ENCODE measurements at regions of chr21 and their contacts with region 1.

Region 1: GRCh38 chr21:33608559-33608958 is 20.1 kb upstream of the DONSON start:
- DNase-seq: peak; percentile 75
- H3K4me3 ChIP-seq: no peak overlapping the region
- H3K27ac ChIP-seq: peak overlapping the region; percentile 70
- H3K4me1 ChIP-seq: peaks cover 11% of the 10 kb centered on the region
- H3K27me3 ChIP-seq: no peaks in the 10 kb centered on the region
- CTCF ChIP-seq: no peak
- POLR2A ChIP-seq: no peak

Region 2: DNA sequence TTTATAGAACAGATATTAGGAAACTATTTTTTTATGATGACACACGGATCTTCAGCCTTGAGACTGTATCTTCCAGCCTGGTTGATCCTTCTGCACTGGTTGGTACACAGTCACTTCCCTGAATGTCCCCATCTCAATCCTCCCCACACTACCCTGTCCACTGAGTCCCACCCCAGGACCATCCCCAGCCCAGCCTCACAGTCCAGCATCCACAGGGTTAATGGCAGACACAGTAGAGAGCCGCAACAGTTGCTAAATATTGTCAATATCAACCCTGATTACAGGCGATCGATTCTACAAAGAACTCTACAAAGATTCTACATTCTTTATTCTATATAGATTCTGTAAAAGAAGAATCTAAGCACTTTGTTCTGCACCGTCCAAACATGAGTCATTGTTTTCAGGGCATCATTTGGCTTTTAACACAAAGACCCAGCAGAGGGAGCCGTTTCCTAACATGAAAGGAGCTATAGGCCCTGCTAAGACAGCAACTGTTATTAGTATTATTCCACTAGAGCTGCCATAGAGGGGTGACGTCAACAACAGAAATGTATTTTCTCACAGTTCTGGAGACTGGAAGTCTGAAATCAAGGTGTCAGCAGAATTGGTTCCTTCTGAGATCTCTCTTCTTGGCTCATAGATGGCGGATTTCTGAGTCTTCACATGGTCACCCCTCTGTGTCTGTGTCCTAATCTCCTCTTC is 408.9 kb before region 1 on chr21:
- CTCF ChIA-PET with region 1: interaction called, 12 read pairs
- POLR2A ChIA-PET with region 1: no interaction called
- dilution Hi-C with region 1: no loop called
- intact Hi-C with region 1: no loop called
- DNase-seq: peak; percentile 95
- H3K4me3 ChIP-seq: no peak overlapping the region
- H3K27ac ChIP-seq: no peak overlapping the region
- H3K4me1 ChIP-seq: no peaks in the 10 kb centered on the region
- H3K27me3 ChIP-seq: no peaks in the 10 kb centered on the region
- CTCF ChIP-seq: peak; percentile 66
- POLR2A ChIP-seq: no peak

Region 3: GRCh38 chr21:33355355-33355754 is 253.2 kb before region 1 on chr21:
- CTCF ChIA-PET with region 1: no interaction called
- POLR2A ChIA-PET with region 1: no interaction called
- dilution Hi-C with region 1: no loop called
- intact Hi-C with region 1: no loop called
- DNase-seq: peak; percentile 20
- H3K4me3 ChIP-seq: no peak overlapping the region
- H3K27ac ChIP-seq: no peak overlapping the region
- H3K4me1 ChIP-seq: peaks cover 3% of the 10 kb centered on the region
- H3K27me3 ChIP-seq: no peaks in the 10 kb centered on the region
- CTCF ChIP-seq: no peak
- POLR2A ChIP-seq: no peak

Region 4: DNA sequence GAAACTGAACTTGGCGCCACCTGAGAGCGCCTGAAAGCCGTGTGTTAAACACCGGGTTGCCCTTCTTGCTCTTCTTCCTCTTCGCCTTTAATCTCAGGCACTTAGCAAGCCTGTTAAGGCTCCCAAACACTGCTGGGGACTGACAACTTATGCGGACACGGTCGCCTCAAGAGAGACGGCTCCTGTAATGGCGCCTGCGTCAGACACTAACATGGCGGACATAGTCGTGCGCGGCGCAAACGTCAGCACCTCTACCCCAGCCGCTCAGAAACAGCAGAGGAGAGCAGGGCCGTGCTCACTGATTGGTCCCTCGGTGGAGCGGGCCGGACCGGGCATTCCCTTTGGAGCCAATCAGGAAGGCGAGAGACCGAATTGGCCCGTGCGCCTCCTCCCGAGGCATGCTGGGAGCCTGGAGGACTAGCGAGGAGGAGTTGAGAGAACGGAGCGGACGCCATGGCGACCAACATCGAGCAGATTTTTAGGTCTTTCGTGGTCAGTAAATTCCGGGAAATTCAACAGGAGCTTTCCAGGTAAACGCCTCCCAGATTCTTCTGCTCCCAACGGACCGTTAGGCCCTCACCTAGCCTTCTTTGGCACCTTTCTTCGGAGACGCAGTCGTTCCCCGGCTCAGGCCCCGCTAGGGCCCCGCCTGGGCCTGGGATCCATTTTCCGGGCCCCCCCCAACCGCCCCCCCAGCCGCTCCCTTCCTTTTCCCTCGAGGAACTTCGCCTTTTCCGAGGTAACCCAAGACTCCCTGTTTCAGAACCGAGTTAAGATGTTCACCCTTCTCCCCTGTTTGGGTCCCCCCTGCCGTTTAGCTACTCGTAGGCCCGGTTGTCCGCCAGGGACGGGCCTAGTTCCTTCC is 65.7 kb before region 1 on chr21 and contains the start of gene SON:
- CTCF ChIA-PET with region 1: interaction called, 18 read pairs
- POLR2A ChIA-PET with region 1: no interaction called
- dilution Hi-C with region 1: no loop called
- intact Hi-C with region 1: loop called (anchors 5 kb)
- DNase-seq: peak; percentile 99
- H3K4me3 ChIP-seq: peak within 1 kb of the TSS; percentile 71 to 98 (median 93)
- H3K27ac ChIP-seq: peak within 1 kb of the TSS; percentile 93
- H3K4me1 ChIP-seq: peaks cover 25% of the 10 kb centered on the region
- H3K27me3 ChIP-seq: no peaks in the 10 kb centered on the region
- CTCF ChIP-seq: no peak
- POLR2A ChIP-seq: peak; percentile 91
- total RNA-seq, gene SON: 297 and 304 TPM in 2 replicates

Region 5: GRCh38 chr21:33572350-33572749 is 36.2 kb before region 1 on chr21:
- CTCF ChIA-PET with region 1: interaction called, 39 read pairs
- POLR2A ChIA-PET with region 1: no interaction called
- dilution Hi-C with region 1: no loop called
- intact Hi-C with region 1: no loop called
- DNase-seq: peak; percentile 26
- H3K4me3 ChIP-seq: no peak overlapping the region
- H3K27ac ChIP-seq: no peak overlapping the region
- H3K4me1 ChIP-seq: no peaks in the 10 kb centered on the region
- H3K27me3 ChIP-seq: no peaks in the 10 kb centered on the region
- CTCF ChIP-seq: no peak
- POLR2A ChIP-seq: no peak

Region 6: DNA sequence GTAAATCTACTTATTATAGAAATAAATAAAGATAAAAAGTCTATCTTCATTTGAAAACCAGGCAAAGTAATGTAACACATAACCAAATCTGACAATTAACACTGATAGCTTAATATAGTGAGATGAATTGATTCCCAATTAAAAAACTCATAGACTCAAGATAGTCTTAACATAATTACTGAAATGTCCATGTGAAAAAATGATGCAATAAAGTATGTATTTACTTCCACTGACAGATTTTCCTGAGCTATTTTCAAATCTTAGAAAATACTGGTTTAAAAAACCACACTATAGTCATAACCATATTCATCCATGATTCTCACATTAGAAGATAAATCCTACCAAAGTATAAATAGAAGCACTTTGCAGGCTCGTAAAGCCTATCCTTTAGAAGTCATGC is 10.5 kb before region 1 on chr21:
- CTCF ChIA-PET with region 1: interaction called, 29 read pairs
- POLR2A ChIA-PET with region 1: no interaction called
- dilution Hi-C with region 1: no loop called
- intact Hi-C with region 1: no loop called
- DNase-seq: no peak
- H3K4me3 ChIP-seq: no peak overlapping the region
- H3K27ac ChIP-seq: no peak overlapping the region
- H3K4me1 ChIP-seq: no peaks in the 10 kb centered on the region
- H3K27me3 ChIP-seq: no peaks in the 10 kb centered on the region
- CTCF ChIP-seq: no peak
- POLR2A ChIP-seq: no peak

Region 7: DNA sequence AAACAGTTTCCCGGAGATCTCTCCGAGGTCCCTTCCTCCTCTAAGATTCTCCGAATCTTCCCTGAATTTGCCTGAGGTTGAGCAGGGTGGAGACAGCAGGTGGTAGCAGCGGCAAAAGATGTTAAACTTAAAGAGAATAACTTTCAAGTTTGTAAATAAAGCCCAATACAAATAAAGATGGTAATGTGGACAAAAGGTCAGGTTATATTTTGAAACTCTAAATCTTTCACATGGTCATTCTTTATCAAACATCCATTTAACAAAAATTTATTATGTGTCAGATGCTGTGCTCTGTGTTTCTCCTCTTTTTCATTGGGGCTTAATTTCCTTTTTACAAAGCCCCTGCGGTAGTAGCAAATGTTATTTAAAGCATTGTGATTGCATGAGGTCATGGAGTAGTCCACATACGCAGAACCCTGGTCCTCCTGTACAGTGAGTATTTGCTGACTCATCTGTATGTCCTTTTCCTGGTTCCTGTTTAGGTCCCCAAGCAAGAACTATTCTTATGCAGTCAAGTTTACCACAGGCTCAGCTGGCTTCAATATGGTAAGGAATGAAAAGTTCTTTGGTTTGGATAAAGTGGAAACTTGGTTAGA is 153.0 kb after region 1 on chr21:
- CTCF ChIA-PET with region 1: interaction called, 11 read pairs
- POLR2A ChIA-PET with region 1: no interaction called
- dilution Hi-C with region 1: no loop called
- intact Hi-C with region 1: no loop called
- DNase-seq: peak; percentile 95
- H3K4me3 ChIP-seq: peak overlapping the region in 2 of 3 experiments; percentile 6 to 61
- H3K27ac ChIP-seq: peak overlapping the region; percentile 97
- H3K4me1 ChIP-seq: peaks cover 41% of the 10 kb centered on the region
- H3K27me3 ChIP-seq: no peaks in the 10 kb centered on the region
- CTCF ChIP-seq: no peak
- POLR2A ChIP-seq: peak; percentile 58

Region 8: DNA sequence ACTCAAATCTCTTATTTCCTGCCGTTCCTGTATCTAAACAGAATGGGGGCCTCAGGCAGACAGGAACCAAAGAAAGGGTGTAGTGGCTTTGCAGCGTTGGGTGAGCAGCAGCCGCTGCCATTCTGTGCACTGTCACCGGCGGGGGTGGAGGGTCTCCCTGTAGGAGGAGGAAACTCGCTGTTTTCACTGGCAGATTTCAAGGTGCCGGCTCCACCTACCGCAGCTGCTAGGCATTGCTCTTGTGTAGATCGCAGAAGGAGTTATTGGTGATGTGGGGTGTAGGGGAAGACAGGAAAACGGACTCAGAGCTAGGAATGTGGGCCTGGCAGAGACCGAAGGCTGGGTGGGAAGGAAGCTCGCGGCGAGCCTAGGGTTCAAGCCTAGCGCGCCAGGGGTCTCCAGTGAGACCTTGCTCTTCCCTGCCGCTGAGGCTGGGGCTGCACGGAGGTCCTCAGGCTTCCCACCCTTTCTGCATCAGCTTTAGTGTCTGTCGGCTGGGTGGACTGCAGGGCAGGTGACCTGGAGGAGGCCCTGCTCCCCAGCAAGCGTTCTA is 286.3 kb after region 1 on chr21:
- CTCF ChIA-PET with region 1: interaction called, 33 read pairs
- POLR2A ChIA-PET with region 1: no interaction called
- dilution Hi-C with region 1: no loop called
- intact Hi-C with region 1: loop called (anchors 2 kb)
- DNase-seq: peak; percentile 92
- H3K4me3 ChIP-seq: peak overlapping the region in 1 of 3 experiments; percentile 3
- H3K27ac ChIP-seq: no peak overlapping the region
- H3K4me1 ChIP-seq: peaks cover 30% of the 10 kb centered on the region
- H3K27me3 ChIP-seq: no peaks in the 10 kb centered on the region
- CTCF ChIP-seq: peak; percentile 75 to 78
- POLR2A ChIP-seq: no peak

Measured in endothelial cell of umbilical vein (primary cell).